Endothelial cell of umbilical vein (primary cell): ENCODE measurements at regions of chr6 and their contacts with region 1.

Region 1: GRCh38 chr6:41367700-41368099 is 32.3 kb downstream of the NCR2 start:
- DNase-seq: peak; percentile 62
- H3K4me3 ChIP-seq: no peak overlapping the region
- H3K27ac ChIP-seq: no peak overlapping the region
- H3K4me1 ChIP-seq: peaks cover 3% of the 10 kb centered on the region
- H3K27me3 ChIP-seq: peaks cover 27 to 46% of the 10 kb centered on the region in 2 experiments
- CTCF ChIP-seq: peak; percentile 50 to 81
- POLR2A ChIP-seq: no peak

Region 2: DNA sequence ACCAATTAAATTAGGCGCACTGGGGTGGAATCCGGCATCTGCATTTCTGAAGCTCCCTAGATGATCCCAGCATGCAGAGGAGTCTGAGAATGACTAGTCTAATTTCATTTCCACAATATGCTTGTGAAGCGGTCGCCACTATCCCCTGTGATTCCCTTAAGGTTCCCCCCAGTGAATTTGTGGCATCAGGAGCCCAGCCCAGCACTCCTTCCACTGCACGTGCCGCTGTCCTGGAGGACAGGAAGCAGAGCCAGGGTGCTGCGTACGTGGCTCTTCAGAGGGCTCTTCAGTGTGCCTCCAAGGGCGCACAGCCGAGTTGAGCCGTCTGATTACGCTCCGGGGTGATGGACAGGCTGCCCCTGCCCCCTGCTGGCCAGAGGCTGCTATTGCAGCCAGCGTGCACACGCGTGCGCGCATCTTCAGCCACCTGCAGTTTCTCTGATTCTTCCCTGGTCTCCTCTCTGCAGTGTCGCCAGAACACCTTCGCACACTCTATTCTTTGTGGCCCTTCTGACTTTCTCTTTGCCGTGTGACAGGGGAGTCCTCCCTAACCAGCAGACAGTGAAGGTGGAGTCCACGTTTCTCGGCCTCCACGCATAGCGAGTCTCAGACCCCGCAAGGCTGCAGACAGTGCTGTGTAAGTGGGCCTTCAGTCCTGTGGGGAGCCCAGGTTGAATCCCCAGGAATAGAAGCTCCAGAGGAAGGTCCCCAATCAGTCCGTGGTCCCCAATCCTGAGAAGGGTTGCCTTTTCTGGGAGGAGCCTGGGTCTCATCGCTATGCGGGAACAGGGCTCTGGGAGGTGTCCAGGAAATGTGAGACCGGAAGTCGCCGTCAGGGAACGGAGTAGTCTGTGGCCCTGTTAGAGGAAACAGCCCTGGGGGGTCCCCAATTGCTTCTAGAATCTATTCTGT is 48.8 kb before region 1 on chr6:
- CTCF ChIA-PET with region 1: interaction called, 11 read pairs
- POLR2A ChIA-PET with region 1: no interaction called
- dilution Hi-C with region 1: no loop called
- intact Hi-C with region 1: no loop called
- DNase-seq: peak; percentile 74
- H3K4me3 ChIP-seq: peak overlapping the region in 1 of 3 experiments; percentile 4
- H3K27ac ChIP-seq: peak overlapping the region; percentile 60
- H3K4me1 ChIP-seq: peaks cover 22% of the 10 kb centered on the region
- H3K27me3 ChIP-seq: peaks cover 14 to 51% of the 10 kb centered on the region in 2 experiments
- CTCF ChIP-seq: peak; percentile 99 to 100
- POLR2A ChIP-seq: no peak

Region 3: GRCh38 chr6:41455818-41456217 is 88.1 kb after region 1 on chr6:
- CTCF ChIA-PET with region 1: interaction called, 8 read pairs
- POLR2A ChIA-PET with region 1: no interaction called
- dilution Hi-C with region 1: no loop called
- intact Hi-C with region 1: loop called (anchors 5 kb)
- DNase-seq: no peak
- H3K4me3 ChIP-seq: no peak overlapping the region
- H3K27ac ChIP-seq: no peak overlapping the region
- H3K4me1 ChIP-seq: no peaks in the 10 kb centered on the region
- H3K27me3 ChIP-seq: peaks cover 2 to 9% of the 10 kb centered on the region in 2 experiments
- CTCF ChIP-seq: no peak
- POLR2A ChIP-seq: no peak

Region 4: DNA sequence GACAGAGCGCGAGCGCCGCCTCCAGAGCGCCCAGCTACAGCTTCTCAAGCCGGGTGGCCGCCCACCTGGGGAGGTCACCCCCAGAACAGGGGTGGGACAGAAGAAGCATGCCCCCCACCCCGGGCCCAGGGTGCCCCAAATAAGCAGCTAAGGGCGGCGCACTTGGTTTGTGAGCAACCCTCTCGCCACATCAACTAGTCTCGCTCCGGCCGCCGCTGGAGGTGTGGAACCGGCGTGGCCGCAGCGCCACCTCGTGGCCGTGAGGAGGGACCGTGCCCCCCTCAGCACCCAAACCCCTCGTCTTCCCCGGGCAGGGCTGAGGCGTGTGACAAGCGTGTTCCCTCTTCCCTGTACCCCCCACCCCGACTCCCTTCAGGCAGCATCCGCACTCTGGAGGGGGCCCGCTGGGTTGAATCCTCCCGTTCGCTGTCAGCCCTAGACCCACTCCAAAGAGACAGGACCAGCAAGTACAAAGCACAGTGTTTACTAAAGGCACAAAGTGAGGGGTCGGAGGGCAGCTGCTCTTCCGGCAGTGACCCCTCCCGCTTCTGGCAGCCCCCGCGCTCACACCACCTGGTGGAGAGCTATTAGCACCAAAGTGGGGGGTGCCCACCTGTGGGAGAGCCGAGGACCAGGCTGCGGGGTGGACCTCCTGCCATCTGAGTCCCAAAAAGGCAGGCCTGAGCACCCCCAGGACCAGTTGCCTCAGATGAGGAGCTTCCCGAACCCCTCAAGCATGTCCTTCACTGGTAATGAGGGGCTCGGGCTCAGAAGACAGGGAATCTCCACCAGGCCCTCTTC is 316.0 kb after region 1 on chr6:
- CTCF ChIA-PET with region 1: interaction called, 38 read pairs
- POLR2A ChIA-PET with region 1: no interaction called
- dilution Hi-C with region 1: no loop called
- intact Hi-C with region 1: loop called (anchors 1 kb)
- DNase-seq: peak; percentile 64
- H3K4me3 ChIP-seq: peak overlapping the region in 1 of 3 experiments; percentile 35
- H3K27ac ChIP-seq: no peak overlapping the region
- H3K4me1 ChIP-seq: peaks cover 8% of the 10 kb centered on the region
- H3K27me3 ChIP-seq: no peaks in the 10 kb centered on the region
- CTCF ChIP-seq: peak; percentile 88 to 97
- POLR2A ChIP-seq: no peak